Adrenal gland (tissue), 19 donors: ENCODE measurements at regions of chr6 and their contacts with region 1.

Region 1: DNA sequence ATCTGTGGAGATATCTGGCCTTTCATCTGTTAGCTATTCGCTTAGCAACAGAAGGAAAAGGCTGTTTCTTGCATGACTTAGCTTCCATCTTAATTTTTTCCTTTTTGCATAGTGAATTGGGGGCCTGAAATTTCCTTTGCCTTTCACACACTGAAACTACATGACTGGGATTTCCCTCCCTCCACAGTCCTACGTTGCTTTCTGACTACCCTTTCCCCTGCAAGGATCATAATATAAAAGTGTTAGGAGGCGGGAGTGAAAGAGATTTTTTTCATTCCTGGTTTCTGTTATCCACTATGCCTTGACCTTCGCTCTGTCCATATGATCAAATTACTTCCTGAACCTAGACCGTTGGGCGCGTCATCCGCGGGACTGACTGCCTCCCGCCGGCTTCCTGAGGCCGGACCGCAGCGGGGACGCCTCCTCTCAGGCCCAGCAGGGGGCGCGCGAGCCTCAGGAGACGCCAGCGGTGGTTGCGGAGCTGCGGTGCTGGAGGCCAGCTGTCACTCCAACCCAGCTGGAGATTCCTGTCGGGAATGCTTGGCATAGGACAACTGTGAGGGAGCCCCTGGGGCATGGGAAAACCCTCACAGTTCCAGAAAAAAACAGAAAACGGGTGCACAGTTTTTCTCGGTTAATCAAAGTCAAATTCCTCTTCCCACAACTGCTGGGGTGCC is 55.6 kb downstream of the MEP1A start:
- DNase-seq: peak; percentile 63 to 93 (median 85)
- H3K4me3 ChIP-seq: no peak overlapping the region
- H3K27ac ChIP-seq: no peak overlapping the region
- H3K4me1 ChIP-seq: peaks cover 0 to 3% of the 10 kb centered on the region in 2 donors
- H3K27me3 ChIP-seq: no peaks in the 10 kb centered on the region
- CTCF ChIP-seq: peak; percentile 75 to 97 (median 92)
- POLR2A ChIP-seq: no peak

Region 2: DNA sequence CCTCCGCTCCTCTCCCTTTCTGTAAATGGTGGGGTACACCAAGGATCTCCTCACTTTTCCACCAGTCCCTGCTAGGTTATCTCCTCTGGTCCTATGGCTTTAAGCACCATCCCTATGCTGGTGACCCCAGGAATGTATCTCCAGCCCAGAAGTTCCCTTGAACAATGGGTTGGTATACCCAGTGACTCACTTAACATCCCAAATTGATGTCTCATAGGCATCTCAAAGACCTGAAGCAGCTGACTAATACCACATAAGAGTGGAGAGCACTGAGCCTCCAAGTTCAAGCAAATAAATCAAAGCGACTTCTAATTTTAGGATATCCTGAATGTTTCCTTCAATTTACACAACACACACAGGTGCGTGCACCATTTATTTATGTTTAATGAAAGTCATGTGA is 145.0 kb after region 1 on chr6:
- intact Hi-C with region 1: loop called (anchors 5 to 10 kb)
- DNase-seq: no peak
- H3K4me3 ChIP-seq: no peak overlapping the region
- H3K27ac ChIP-seq: no peak overlapping the region
- H3K4me1 ChIP-seq: peaks cover 9 to 17% of the 10 kb centered on the region in 2 donors
- H3K27me3 ChIP-seq: no peaks in the 10 kb centered on the region
- CTCF ChIP-seq: no peak
- POLR2A ChIP-seq: no peak

Region 3: GRCh38 chr6:47047479-47048407 is 198.9 kb after region 1 on chr6:
- intact Hi-C with region 1: loop called (anchors 5 to 10 kb)
- DNase-seq: peak; percentile 31 to 76 (median 49)
- H3K4me3 ChIP-seq: no peak overlapping the region
- H3K27ac ChIP-seq: no peak overlapping the region
- H3K4me1 ChIP-seq: no peaks in the 10 kb centered on the region
- H3K27me3 ChIP-seq: no peaks in the 10 kb centered on the region
- CTCF ChIP-seq: peak; percentile 54 to 84 (median 74)
- POLR2A ChIP-seq: no peak